ENCODE measurements at regions of chr14 and their contacts with region 1.

Region 1: DNA sequence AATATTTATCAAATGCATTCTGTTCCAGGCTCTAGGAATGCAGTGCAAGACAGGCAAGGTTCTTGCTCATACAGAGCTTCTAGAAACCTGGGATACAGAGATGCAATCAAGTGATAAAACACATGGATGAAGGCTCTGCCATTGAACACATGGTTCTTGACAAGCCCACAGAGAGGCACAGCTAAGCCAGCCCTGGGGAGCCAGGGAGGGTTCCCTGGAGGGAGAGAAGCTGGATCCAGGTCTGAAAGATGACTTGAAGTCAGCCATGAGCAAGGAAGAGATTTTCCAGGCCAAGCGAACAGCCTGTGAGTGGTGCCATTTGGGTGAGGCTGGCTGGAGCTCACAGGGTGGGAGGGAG is 66.2 kb downstream of the IRF2BPL start:
- DNase-seq: no peak
- ATAC-seq: no peak
- H3K4me3 ChIP-seq: peak overlapping the region; percentile 26
- H3K4me3 Mint-ChIP-seq: peak overlapping the region; percentile 89
- H3K27ac ChIP-seq: peak overlapping the region; percentile 68
- H3K27ac Mint-ChIP-seq: peak overlapping the region; percentile 91 to 95
- H3K4me1 ChIP-seq: peaks cover 87% of the 10 kb centered on the region
- H3K4me1 Mint-ChIP-seq: peaks cover 70 to 92% of the 10 kb centered on the region in 2 donors
- H3K27me3 ChIP-seq: no peaks in the 10 kb centered on the region
- H3K27me3 Mint-ChIP-seq: peaks cover 7 to 16% of the 10 kb centered on the region in 2 donors
- CTCF ChIP-seq: no peak

Region 2: DNA sequence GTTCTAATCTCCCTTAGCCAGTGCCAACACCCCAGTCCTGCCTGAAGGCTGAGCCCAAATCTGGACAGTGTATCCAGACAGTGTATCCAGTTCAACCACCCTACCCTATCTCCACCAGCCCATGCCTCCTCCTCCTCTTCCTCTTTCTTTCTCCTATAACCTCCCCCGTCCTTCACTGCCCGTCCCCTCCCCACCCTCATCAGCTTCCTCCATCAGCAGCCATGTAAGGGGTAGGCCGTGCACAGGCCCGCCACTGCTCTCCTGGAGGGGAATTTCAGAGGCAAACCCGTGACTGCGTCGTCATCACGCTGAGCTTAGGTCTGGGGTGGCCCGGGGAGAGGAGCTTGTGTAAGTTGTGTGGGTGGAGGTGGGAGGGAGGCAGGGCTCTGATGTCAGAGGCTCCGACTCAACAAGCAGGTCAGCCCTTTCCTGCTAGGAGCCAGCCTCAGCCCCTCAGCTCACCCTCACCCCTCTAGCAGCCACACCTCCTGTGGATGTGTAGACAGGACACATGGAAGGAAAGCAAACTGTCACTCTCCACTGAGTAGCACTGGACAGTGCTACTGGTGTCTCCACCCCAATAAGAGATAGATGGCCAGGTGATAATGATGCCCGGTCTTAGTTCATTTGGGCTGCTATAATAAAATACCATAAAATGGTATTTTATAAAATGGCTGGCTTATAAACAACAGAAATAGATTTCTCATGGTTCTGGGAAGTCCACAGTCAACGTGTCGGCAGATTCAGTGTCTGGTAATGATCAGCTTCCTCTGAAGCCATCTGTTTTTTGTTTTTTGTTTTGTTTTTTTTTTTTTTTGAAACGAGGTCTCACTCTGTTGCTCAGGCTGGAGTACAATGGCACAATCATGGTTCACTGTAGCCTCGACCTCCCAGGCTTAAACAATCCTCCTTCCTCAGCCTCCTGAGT is 15.8 kb after region 1 on chr14:
- intact Hi-C with region 1: loop called (anchors 1 kb)
- DNase-seq: peak; percentile 81 to 93
- ATAC-seq: peak; percentile 86 to 97 (median 93)
- H3K4me3 ChIP-seq: no peak overlapping the region
- H3K4me3 Mint-ChIP-seq: no peak overlapping the region
- H3K27ac ChIP-seq: peak overlapping the region; percentile 36
- H3K27ac Mint-ChIP-seq: peak overlapping the region; percentile 66 to 85
- H3K4me1 ChIP-seq: peaks cover 16% of the 10 kb centered on the region
- H3K4me1 Mint-ChIP-seq: peaks cover 0 to 10% of the 10 kb centered on the region in 2 donors
- H3K27me3 ChIP-seq: no peaks in the 10 kb centered on the region
- H3K27me3 Mint-ChIP-seq: no peaks in the 10 kb centered on the region
- CTCF ChIP-seq: no peak

Region 3: DNA sequence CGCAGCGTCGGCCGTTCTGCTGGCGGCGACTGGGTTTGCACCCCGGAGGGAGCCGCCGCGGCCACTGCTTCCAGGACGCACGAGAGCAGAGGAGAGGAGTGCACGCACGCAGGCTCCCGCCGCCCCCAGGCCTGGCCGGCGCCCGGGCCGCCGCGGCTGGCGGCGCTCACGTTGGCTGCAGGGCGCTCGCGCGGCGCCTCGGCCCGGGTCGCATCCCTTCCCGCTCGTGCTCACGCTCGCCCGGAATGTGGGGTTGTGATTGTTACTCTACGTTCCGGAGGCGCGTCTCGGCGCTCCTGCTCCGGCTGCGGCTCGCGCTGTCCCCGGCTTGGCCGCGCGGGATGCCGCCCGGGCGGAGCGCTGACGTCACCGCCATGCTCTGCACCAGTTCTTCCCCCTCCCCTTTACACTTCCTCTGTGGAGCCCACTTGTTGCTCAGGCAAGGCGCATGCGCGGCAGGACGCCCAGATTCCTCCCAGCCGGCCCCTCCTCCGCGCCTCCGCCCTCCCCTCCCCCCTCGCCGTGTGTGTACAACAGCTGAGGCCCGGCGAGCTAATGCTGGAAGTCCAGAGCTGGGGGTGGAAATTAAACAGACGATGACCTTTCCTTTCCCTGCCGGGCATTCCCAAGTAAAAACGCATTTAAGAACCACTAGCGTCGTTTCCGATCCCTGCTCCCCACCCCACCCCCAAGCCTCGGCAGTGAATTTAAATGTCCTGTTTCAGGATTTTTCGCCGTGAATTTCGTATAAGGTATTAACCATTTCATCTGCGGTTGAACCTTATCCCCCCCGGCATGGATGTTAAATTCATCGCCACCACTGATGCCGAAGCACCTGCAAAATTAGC is 66.3 kb after region 1 on chr14 and contains the start of gene IRF2BPL:
- intact Hi-C with region 1: loop called (anchors 1 kb)
- DNase-seq: peak; percentile 91 to 99
- ATAC-seq: peak; percentile 58 to 82 (median 70)
- H3K4me3 ChIP-seq: peak within 1 kb of the TSS; percentile 93
- H3K4me3 Mint-ChIP-seq: peak within 1 kb of the TSS; percentile 95
- H3K27ac ChIP-seq: peak within 1 kb of the TSS; percentile 100
- H3K27ac Mint-ChIP-seq: peak within 1 kb of the TSS; percentile 96 to 98
- H3K4me1 ChIP-seq: peaks cover 64% of the 10 kb centered on the region
- H3K4me1 Mint-ChIP-seq: peaks cover 47 to 48% of the 10 kb centered on the region in 2 donors
- H3K27me3 ChIP-seq: no peaks in the 10 kb centered on the region
- H3K27me3 Mint-ChIP-seq: no peaks in the 10 kb centered on the region
- CTCF ChIP-seq: no peak
- total RNA-seq, gene IRF2BPL: 39.3 to 46.5 (median 46.3) TPM

Measured in natural killer cell (primary cell).